OCI-LY7 (cell line): ENCODE measurements at regions of chrX and their contacts with region 1.

Region 1: GRCh38 chrX:71254092-71254941 is at the start of gene ZMYM3:
- DNase-seq: peak; percentile 90
- H3K4me3 ChIP-seq: peak within 1 kb of the TSS; percentile 96
- H3K27ac ChIP-seq: peak within 1 kb of the TSS; percentile 85
- H3K4me1 ChIP-seq: peaks cover 24% of the 10 kb centered on the region
- CTCF ChIP-seq: no peak
- total RNA-seq, gene ZMYM3: 21.8 and 23.8 TPM in 2 replicates

Region 2: DNA sequence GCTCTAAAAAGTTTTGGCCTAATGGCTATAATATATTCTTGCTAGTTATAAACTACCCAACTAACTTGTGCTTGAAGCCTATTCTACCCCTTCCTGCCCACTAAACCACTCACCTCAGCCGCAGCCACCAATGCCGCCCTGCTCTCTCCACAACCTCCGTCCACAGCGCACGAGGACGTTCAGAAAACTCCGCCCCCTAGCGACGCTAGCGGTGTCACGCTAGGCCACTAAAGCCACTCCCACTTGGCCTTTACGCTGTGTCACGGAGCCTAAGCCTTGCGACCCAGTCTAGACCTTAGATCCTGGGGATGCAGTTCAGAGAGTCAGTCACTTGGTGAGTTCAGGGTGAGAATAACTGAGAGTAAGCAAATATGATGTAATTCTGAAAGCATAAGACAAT is 345.8 kb before region 1 on chrX and contains the start of gene TEX11:
- CTCF ChIA-PET with region 1: no interaction called
- POLR2A ChIA-PET with region 1: no interaction called
- intact Hi-C with region 1: no loop called
- DNase-seq: no peak
- H3K4me3 ChIP-seq: no peak within 1 kb of the TSS
- H3K27ac ChIP-seq: no peak within 1 kb of the TSS
- H3K4me1 ChIP-seq: no peaks in the 10 kb centered on the region
- CTCF ChIP-seq: no peak
- total RNA-seq, gene TEX11: not detected in 2 replicates

Region 3: GRCh38 chrX:71198066-71198465 is 56.3 kb before region 1 on chrX:
- CTCF ChIA-PET with region 1: interaction called, 7 read pairs
- POLR2A ChIA-PET with region 1: interaction called, 24 read pairs
- intact Hi-C with region 1: loop called (anchors 5 kb)
- DNase-seq: peak; percentile 72
- H3K4me3 ChIP-seq: peak overlapping the region; percentile 93
- H3K27ac ChIP-seq: peak overlapping the region; percentile 80
- H3K4me1 ChIP-seq: peaks cover 24% of the 10 kb centered on the region
- CTCF ChIP-seq: no peak

Region 4: GRCh38 chrX:71365876-71366673 is 111.8 kb after region 1 on chrX and contains the start of gene TAF1:
- CTCF ChIA-PET with region 1: interaction called, 3 read pairs
- POLR2A ChIA-PET with region 1: interaction called, 5 read pairs
- intact Hi-C with region 1: loop called (anchors 1 kb)
- DNase-seq: peak; percentile 96
- H3K4me3 ChIP-seq: peak within 1 kb of the TSS; percentile 95
- H3K27ac ChIP-seq: peak within 1 kb of the TSS; percentile 87
- H3K4me1 ChIP-seq: peaks cover 19% of the 10 kb centered on the region
- CTCF ChIP-seq: no peak
- total RNA-seq, gene TAF1: 30.2 and 50.8 TPM in 2 replicates